ENCODE measurements at regions of chr11 and their contacts with region 1.

Region 1: GRCh38 chr11:65204646-65205601 is 23.2 kb downstream of the CAPN1 start:
- DNase-seq: peak in 1 of 2 experiments; percentile 95
- H3K4me3 ChIP-seq: no peak overlapping the region; a peak in 1 of 8 replicates
- H3K27ac ChIP-seq: peak overlapping the region; percentile 60
- H3K4me1 ChIP-seq: peaks cover 0 to 14% (median 10%) of the 10 kb centered on the region in 4 experiments; a peak in 6 of 7 replicates
- H3K27me3 ChIP-seq: no peaks in the 10 kb centered on the region
- CTCF ChIP-seq: peak in 2 of 3 experiments; percentile 97 to 98; a peak in 3 of 4 replicates
- EP300 ChIP-seq: 0 out of 3 replicates have a peak, but pooled peaks of 1 of the 2 experiments have one; percentile 17
- POLR2A ChIP-seq: no peak; a peak in 1 of 3 replicates
- RAD21 ChIP-seq: peak; percentile 95 to 96

Region 2: DNA sequence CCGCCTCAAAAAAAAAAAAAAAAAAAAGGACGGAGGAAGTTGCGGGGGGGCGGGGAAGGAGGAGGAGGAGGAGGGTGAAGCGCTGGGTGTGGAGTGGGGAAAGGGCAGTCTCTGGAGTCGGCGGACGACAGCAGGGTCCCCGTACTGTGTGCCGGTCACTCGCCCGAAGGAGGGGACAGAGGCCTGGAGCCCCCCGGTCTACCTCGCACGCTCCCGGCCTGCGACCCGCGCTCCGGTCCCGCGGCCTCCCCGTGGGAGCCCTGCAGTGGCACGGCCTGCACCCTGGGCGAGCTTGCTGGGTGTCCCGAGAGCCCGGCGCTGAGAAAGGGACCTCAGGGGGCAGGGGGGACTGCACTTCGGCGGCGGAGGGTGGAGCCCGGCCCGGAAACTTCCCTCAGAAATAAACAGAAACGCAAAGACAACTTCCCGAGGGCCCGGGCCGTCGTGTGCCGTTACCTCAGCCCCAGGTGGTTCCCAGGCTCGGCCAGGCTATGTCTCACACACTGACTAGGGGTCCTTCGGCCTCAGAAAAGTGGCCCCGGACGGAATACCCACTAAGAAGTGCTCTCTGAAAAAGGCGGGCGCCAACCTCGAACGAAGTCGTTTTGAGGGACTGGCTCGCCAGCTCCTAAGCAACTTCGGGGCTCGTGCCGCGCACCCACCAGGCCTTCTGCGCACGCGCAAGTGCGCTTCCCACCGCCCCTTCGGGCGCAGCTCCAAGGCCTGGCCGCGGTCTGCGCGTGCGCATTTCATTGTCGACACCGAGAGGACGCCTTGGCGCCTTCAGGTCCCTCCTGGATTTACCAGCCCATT is 233.3 kb before region 1 on chr11 and contains the start of gene MAJIN:
- CTCF ChIA-PET with region 1: no interaction called
- POLR2A ChIA-PET with region 1: no interaction called
- DNase-seq: peak; percentile 71 to 89
- H3K4me3 ChIP-seq: no peak within 1 kb of the TSS; a peak in 1 of 8 replicates
- H3K27ac ChIP-seq: no peak within 1 kb of the TSS
- H3K4me1 ChIP-seq: no peaks in the 10 kb centered on the region
- H3K27me3 ChIP-seq: peaks cover 0 to 12% (median 7%) of the 10 kb centered on the region in 4 experiments; a peak in 5 of 7 replicates
- CTCF ChIP-seq: no peak
- EP300 ChIP-seq: no peak
- POLR2A ChIP-seq: no peak
- RAD21 ChIP-seq: no peak
- total RNA-seq, gene MAJIN: not detected in 2 replicates

Region 3: DNA sequence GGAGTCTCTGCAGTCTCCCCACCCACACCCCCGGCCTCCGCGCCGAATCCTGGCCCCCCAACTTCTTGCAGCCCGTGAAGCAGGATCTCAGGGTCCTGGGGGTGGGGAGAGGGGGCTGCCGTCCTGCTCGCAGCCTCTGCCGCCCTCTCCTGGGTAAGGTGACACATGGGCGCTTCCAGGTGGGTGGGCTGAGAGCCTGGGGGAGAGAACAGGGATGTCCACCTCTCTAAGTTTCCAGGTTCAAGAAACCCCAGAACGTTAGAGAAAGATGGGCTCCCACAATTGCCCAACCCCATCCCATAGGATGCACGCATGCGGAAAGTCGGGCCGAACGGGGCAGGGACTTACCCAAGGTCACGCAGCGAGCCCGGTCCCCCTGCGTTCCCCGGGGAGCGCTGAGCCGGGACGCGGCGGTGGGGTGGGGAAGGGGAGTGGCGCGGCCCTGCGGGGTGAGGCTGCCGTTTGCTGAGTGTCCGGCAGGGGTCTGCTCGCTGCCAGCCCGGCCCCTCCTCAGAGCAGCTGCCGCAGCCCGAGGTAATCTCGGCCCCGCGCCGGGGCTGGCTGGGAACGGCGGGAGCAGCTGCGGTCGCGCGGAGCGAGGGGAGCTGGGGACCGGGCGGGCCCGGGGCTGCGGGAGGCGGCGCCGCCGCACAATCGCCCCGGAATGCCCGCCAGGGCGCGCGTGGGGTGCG is 23.9 kb before region 1 on chr11:
- CTCF ChIA-PET with region 1: interaction called, 47 read pairs
- POLR2A ChIA-PET with region 1: interaction called, 8 read pairs
- DNase-seq: peak in 1 of 2 experiments; percentile 90
- H3K4me3 ChIP-seq: peak overlapping the region; percentile 65 to 82 (median 74)
- H3K27ac ChIP-seq: no peak overlapping the region
- H3K4me1 ChIP-seq: peaks cover 7 to 32% (median 21%) of the 10 kb centered on the region in 4 experiments
- H3K27me3 ChIP-seq: no peaks in the 10 kb centered on the region
- CTCF ChIP-seq: peak; percentile 51 to 74 (median 69)
- EP300 ChIP-seq: no peak
- POLR2A ChIP-seq: peak in 1 of 2 experiments; percentile 52; a peak in 2 of 3 replicates
- RAD21 ChIP-seq: peak; percentile 65 to 71

Region 4: GRCh38 chr11:65225279-65226102 is 20.6 kb after region 1 on chr11:
- CTCF ChIA-PET with region 1: interaction called, 184 read pairs
- POLR2A ChIA-PET with region 1: interaction called, 324 read pairs
- DNase-seq: peak in 1 of 2 experiments; percentile 77
- H3K4me3 ChIP-seq: peak overlapping the region; percentile 37 to 69 (median 56)
- H3K27ac ChIP-seq: peak overlapping the region; percentile 12; the same call in 1 of the 2 replicates
- H3K4me1 ChIP-seq: peaks cover 0 to 9% (median 7%) of the 10 kb centered on the region in 4 experiments; a peak in 6 of 7 replicates
- H3K27me3 ChIP-seq: no peaks in the 10 kb centered on the region
- CTCF ChIP-seq: peak; percentile 46 to 51 (median 49)
- EP300 ChIP-seq: no peak
- POLR2A ChIP-seq: peak in 1 of 2 experiments; percentile 58; a peak in 1 of 3 replicates
- RAD21 ChIP-seq: peak; percentile 59 to 66

Region 5: GRCh38 chr11:65251476-65251875 is 46.6 kb after region 1 on chr11:
- CTCF ChIA-PET with region 1: interaction called, 169 read pairs
- POLR2A ChIA-PET with region 1: interaction called, 38 read pairs
- DNase-seq: no peak
- H3K4me3 ChIP-seq: no peak overlapping the region
- H3K27ac ChIP-seq: no peak overlapping the region
- H3K4me1 ChIP-seq: no peaks in the 10 kb centered on the region; a peak in 2 of 7 replicates
- H3K27me3 ChIP-seq: no peaks in the 10 kb centered on the region
- CTCF ChIP-seq: no peak
- EP300 ChIP-seq: no peak
- POLR2A ChIP-seq: no peak
- RAD21 ChIP-seq: no peak

Region 6: GRCh38 chr11:65314501-65315203 is 109.7 kb after region 1 on chr11 and contains the start of gene CDC42EP2:
- CTCF ChIA-PET with region 1: interaction called, 15 read pairs
- POLR2A ChIA-PET with region 1: interaction called, 3 read pairs
- DNase-seq: peak in 1 of 2 experiments; percentile 87
- H3K4me3 ChIP-seq: peak within 1 kb of the TSS; percentile 34 to 84 (median 68)
- H3K27ac ChIP-seq: no peak within 1 kb of the TSS; the same call in 1 of the 2 replicates
- H3K4me1 ChIP-seq: peaks cover 0 to 15% (median 11%) of the 10 kb centered on the region in 4 experiments; a peak in 6 of 7 replicates
- H3K27me3 ChIP-seq: peaks cover 0 to 15% (median 10%) of the 10 kb centered on the region in 4 experiments; a peak in 5 of 7 replicates
- CTCF ChIP-seq: 0 out of 4 replicates have a peak, but pooled peaks of 1 of the 3 experiments have one; percentile 1
- EP300 ChIP-seq: no peak
- POLR2A ChIP-seq: peak; percentile 55 to 67; a peak in 2 of 3 replicates
- RAD21 ChIP-seq: no peak
- total RNA-seq, gene CDC42EP2: 11.7 and 11.8 TPM in 2 replicates

Region 7: DNA sequence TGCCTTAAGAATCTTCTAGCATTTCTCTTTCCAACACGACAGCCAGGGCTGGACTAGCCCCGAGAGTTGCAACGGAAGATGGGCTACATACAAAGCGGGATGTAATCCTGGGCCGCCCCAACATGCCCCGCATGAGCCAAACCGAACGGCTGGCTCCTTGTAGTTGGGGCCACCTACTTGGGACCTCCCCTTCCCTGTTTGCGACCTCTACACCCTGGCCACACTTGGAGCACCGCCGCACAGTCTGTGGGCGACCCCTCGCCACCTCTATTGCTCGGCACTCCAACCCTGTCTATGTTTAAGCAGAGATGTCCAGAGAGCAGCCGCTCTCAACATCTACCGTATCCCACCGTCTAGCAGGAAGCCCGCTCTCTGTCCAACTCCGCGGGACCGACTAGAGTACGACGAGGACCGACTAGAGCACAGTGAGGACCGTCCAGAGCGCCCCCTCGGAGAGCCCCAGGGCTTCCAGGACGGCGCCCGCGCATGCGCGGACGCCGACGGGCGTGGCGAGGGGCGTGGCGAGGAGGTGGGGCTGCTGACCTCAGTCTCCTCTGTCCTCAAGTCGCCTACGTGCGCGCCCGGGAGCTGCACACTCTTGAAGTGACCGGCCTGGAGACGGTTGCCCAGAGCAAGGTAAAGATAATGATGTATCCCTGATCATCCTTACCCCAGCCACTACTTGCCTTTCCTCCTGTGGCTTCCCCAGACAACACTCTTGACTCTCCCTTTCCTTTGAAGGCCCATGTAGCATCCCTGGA is 250.0 kb after region 1 on chr11:
- CTCF ChIA-PET with region 1: no interaction called
- POLR2A ChIA-PET with region 1: no interaction called
- DNase-seq: peak; percentile 69 to 92
- H3K4me3 ChIP-seq: peak overlapping the region; percentile 46 to 67 (median 54); a peak in 7 of 8 replicates
- H3K27ac ChIP-seq: no peak overlapping the region
- H3K4me1 ChIP-seq: peaks cover 2 to 11% (median 6%) of the 10 kb centered on the region in 4 experiments; a peak in 6 of 7 replicates
- H3K27me3 ChIP-seq: peaks cover 20 to 59% (median 53%) of the 10 kb centered on the region in 4 experiments
- CTCF ChIP-seq: no peak
- EP300 ChIP-seq: no peak
- POLR2A ChIP-seq: peak in 1 of 2 experiments; percentile 29; a peak in 1 of 3 replicates
- RAD21 ChIP-seq: no peak